ENCODE measurements at regions of chr21 and their contacts with region 1.

Region 1: DNA sequence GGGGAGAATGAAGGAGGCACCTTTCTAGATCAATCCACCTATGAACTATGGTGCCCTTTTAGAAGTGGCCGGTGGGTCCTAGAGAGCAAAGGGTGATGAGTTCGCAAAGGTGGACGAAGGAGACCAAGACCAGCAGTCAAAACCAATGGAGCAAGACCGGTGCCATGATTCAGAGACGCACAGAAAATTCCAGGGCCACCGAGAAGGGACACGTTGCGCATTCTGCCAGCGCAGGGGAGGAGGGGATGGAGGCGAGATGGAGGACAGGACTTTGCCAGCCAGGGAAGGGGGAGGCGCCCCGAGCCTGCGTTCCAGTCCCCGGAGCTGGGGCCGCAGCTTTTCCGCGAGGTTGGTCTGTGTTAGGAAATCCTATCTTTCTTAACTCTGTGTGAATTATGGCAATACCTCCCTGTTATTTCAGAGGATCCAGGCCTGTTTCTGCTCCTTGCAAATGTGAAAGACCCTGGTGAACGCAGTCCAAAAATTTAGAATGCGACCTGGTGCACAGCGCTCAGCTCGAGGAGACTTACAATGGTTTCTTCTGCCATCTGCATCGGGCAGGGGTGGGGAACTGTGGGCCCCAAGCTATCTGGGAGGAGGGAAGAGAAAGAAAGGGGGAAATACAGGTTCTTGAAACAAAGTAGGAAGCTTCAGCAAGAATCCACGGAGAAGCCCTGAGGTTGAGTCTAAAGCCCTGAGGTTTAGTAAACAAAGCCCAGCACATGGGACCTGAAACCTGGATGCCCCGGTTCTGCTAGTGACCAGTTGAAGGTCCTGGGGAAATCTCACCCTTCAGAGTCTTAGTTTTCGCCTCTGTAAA is 129.4 kb downstream of the MRPS6 start:
- DNase-seq: peak; percentile 48 to 86
- H3K4me3 ChIP-seq: peak overlapping the region; percentile 49 to 60
- H3K27ac ChIP-seq: peak overlapping the region; percentile 71 to 78
- H3K4me1 ChIP-seq: peaks cover 0 to 65% (median 25%) of the 10 kb centered on the region in 4 donors
- H3K27me3 ChIP-seq: no peaks in the 10 kb centered on the region
- CTCF ChIP-seq: no peak

Region 2: GRCh38 chr21:33780631-33781030 is 422.1 kb before region 1 on chr21:
- intact Hi-C with region 1: no loop called
- DNase-seq: no peak
- H3K4me3 ChIP-seq: no peak overlapping the region
- H3K27ac ChIP-seq: no peak overlapping the region
- H3K4me1 ChIP-seq: peaks cover 0 to 16% (median 0%) of the 10 kb centered on the region in 4 donors
- H3K27me3 ChIP-seq: no peaks in the 10 kb centered on the region
- CTCF ChIP-seq: no peak

Region 3: DNA sequence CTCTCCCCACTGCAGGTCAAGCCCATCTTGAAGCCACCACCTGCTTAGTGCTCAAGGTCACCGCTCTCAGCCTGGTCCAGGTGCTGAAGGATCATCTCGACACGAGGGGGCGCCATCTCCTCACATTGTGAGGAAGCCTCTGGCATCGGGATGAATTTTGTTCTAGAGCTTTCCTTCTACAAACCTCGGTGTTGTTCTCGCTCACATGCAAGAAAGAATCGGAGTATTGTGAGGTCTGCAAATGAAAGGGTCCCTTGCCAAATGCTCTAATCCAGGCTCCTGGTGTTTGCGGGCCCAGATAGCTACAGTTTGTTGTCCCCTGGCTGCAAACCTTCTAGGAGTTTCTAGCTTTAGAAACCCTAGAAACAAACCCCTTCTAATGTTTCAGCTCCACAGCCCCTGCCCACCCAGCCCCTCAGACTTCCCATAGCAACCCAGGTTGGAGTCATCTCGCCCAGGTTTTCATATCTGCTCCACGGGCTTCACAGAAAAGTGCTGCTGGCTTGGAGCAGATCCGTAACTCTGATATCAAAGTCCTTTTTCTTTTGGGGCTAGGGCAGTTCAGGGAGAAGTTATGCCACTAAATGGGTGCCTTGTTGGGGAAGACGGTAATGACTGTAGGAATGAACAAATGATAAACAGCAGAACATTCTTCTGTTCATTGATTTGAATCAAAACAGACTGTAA is 278.5 kb before region 1 on chr21:
- intact Hi-C with region 1: loop called (anchors 5 kb)
- DNase-seq: peak; percentile 85 to 89
- H3K4me3 ChIP-seq: peak overlapping the region in 1 of 2 donors; percentile 9
- H3K27ac ChIP-seq: peak overlapping the region; percentile 30 to 57
- H3K4me1 ChIP-seq: peaks cover 0 to 12% (median 6%) of the 10 kb centered on the region in 4 donors
- H3K27me3 ChIP-seq: no peaks in the 10 kb centered on the region
- CTCF ChIP-seq: peak; percentile 84 to 97

Region 4: DNA sequence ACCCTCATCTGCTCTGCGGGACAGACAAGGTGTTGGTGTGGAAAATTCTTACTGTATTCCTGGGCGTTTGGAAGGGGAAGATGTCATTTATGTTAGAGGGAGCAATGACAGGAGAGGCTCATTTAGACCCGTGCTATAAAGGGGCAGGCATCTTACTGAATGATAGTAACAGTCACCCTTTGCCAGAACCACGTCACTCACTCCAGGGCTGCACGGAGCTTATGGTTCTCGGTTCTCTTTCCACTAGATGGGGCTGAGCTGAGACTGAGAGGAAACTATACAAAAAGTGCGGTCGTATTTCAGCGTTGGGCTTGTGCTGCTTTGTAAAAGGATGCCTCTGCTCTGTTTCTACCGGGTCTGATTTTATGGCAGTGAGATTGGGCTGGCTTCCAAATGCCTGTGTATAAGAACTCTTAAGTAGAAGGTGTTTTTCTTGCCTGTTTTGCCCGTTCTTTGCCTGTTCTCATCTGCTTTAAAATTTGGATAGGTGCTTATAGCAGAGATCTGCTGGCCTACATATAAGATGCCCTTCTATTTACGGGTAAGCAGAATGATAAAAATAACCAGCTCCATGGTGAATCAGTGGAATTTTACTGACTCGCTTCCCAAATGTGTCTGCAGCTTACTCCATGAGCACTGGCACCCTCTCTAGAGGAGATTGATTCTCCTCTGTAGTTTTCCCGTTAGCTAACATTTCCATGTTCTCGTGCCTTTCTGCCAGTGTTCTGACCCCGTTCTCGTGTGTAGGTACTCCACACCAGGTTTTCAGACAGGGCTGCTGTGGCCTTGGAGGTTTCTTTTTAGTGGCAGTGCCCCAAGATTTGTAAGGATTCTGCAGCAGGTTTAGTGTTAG is 73.5 kb before region 1 on chr21:
- intact Hi-C with region 1: no loop called
- DNase-seq: peak; percentile 69 to 87
- H3K4me3 ChIP-seq: peak overlapping the region; percentile 20 to 34
- H3K27ac ChIP-seq: peak overlapping the region; percentile 63 to 77
- H3K4me1 ChIP-seq: peaks cover 4 to 99% (median 70%) of the 10 kb centered on the region in 4 donors
- H3K27me3 ChIP-seq: no peaks in the 10 kb centered on the region
- CTCF ChIP-seq: peak; percentile 37 to 41

Region 5: DNA sequence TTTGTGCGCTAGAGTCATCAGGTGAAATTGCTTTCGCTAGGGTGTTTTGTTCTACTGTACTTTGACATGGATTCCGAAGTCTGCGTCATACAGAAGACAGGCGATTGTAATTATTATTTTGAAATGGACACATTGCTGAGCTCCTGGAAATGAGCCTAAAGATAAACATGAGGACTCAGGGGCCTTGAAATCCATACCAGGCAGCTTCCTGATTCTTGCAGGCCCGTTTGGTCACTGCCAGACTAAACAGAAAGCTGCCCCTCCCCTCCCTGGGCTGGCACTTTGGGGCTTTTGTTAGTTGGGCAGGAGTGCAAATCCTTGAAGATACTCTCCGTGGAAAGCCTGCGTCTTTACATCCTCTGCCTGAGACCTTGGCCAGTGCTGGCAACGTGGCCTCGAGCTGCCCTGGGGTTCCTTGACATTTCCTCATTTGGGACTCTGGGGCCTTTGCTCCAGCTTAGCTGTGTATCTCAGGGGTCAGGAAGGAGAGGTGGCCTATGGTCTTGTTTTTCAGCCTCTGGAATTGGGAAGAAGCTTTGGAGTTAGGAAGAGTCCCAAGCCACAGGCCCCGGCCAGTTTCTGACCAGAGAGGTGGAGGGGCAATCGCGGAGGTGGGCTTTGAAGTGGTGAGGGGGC is 134.1 kb after region 1 on chr21:
- intact Hi-C with region 1: loop called (anchors 5 kb)
- DNase-seq: peak in 1 of 2 donors; percentile 78
- H3K4me3 ChIP-seq: no peak overlapping the region
- H3K27ac ChIP-seq: peak overlapping the region; percentile 70 to 79
- H3K4me1 ChIP-seq: peaks cover 0 to 89% (median 48%) of the 10 kb centered on the region in 4 donors
- H3K27me3 ChIP-seq: no peaks in the 10 kb centered on the region
- CTCF ChIP-seq: no peak